ENCODE measurements at regions of chr6 and their contacts with region 1.

Region 1: DNA sequence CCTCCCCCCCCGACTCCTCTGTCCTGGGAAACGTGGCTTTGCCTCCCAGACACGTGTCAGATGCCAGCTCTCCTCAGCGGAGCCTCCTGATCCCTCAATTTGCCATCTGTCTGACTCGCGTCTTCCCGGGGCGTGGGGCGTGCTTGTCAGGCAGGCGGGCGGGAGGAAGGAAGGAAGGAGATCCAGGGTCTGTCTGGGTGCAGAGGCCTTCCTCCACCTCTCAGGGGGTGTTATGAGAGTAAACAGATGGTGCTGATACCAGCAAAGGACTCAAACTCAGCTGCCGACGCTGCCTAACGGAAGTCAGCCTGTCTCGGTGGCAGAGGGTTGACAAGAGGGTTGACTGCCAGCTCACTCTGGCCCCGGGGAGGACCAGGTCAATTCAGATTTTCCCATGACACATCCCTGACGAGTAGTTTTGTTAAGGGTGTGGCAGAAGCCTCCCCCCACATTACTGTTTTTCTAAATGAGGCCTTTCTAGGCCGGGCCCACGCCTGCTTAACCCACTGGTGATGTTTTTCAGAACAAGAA is 17.0 kb downstream of the UQCC2 start:
- DNase-seq: peak; percentile 88
- ATAC-seq: peak; percentile 83
- H3K4me3 Mint-ChIP-seq: peak overlapping the region; percentile 29
- H3K27ac Mint-ChIP-seq: peak overlapping the region; percentile 79
- H3K4me1 Mint-ChIP-seq: peaks cover 72% of the 10 kb centered on the region
- H3K27me3 Mint-ChIP-seq: no peaks in the 10 kb centered on the region
- CTCF ChIP-seq: no peak

Region 2: GRCh38 chr6:33683051-33683571 is 11.4 kb before region 1 on chr6:
- CTCF ChIA-PET with region 1: interaction called, 6 read pairs
- POLR2A ChIA-PET with region 1: interaction called, 21 read pairs
- intact Hi-C with region 1: no loop called
- DNase-seq: peak; percentile 82
- ATAC-seq: peak; percentile 91
- H3K4me3 Mint-ChIP-seq: no peak overlapping the region
- H3K27ac Mint-ChIP-seq: peak overlapping the region; percentile 83
- H3K4me1 Mint-ChIP-seq: peaks cover 17% of the 10 kb centered on the region
- H3K27me3 Mint-ChIP-seq: no peaks in the 10 kb centered on the region
- CTCF ChIP-seq: no peak

Region 3: DNA sequence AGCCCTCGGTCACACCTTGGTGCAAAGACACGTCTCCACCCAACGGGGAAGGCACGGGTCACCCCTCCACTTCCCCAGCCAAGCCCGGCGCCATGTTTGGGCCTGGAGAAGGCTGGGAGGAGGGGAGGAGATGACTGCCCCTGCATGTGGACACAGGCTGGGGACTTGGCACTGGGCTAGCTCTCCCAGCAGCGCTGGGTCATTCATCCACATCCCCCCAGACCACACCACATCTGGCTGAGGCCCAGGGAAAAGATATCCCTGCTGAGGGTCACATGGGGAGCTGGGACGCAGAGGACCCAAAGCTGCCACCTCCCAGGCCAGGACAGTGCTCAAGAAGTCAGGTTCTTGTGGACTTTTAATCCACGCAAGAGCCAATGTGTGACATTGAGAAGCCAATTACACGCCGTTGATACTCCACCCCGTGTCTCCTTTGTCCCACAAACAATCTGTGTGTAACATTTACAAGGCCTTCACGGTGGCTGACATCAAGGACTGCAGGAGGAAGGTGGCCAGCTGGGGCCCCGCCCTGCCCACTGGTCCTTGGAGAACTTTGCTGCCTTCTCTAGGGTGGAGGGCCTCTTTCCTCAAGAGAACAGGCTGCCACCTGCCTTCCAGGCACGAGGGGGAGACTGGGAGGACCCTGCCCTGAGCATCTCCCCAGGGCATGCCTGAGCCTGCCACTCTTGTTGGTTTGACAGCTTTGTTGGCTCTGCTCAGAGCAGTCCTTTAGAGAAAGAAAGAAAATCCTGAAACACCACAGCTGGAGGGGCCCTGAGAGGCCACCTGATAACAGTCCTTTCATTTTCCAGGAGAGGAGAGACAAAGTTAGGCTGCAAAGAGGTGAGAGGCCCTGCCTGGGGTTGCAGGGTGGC is 57.5 kb after region 1 on chr6:
- CTCF ChIA-PET with region 1: no interaction called
- POLR2A ChIA-PET with region 1: no interaction called
- intact Hi-C with region 1: no loop called
- DNase-seq: no peak
- ATAC-seq: no peak
- H3K4me3 Mint-ChIP-seq: no peak overlapping the region
- H3K27ac Mint-ChIP-seq: no peak overlapping the region
- H3K4me1 Mint-ChIP-seq: no peaks in the 10 kb centered on the region
- H3K27me3 Mint-ChIP-seq: no peaks in the 10 kb centered on the region
- CTCF ChIP-seq: no peak

Region 4: DNA sequence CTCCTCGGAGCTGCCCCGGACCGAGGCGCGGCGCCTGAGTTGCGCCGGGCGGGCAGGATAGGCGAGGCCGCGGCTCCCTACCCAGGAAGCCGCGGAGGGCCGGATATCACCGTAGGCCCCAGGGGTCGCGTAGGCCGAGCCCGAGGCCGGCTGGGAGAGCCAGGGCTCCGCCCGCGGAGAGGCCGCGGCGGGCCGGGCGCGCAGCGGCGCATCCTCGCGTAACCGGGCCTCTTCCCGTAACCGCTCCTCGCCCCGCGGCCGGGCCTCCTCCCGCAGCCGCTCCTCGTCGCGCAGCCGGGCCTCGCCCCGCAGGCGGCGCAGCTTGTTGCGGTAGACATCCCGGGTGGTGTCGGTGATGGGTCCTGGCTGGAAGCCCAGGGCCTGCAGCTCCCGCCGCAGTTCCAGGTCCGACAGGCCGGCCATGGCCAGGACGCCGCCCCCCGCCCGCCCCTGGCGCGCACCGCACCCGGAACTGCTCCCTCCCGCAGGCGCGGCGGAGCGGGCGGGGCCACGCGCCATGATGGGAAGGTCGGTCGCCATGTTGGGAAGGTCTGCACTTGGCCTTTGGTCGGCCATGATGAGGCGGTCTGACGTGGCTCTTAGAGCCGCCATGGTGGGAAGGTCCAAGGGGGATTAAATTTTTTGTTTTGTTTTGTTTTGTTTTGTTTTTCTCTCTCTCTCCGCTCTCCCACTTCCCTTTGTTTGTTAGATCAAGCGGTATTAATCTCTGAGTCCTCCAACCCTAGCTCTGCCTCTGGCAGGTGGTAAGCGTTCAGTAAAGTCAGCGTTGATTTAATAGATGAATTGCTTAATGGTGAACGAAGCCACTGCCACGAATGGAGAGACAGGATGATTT is 94.5 kb after region 1 on chr6 and contains the start of gene LEMD2:
- CTCF ChIA-PET with region 1: no interaction called
- POLR2A ChIA-PET with region 1: no interaction called
- intact Hi-C with region 1: no loop called
- DNase-seq: peak; percentile 92
- ATAC-seq: peak; percentile 90
- H3K4me3 Mint-ChIP-seq: peak within 1 kb of the TSS; percentile 85
- H3K27ac Mint-ChIP-seq: peak within 1 kb of the TSS; percentile 93
- H3K4me1 Mint-ChIP-seq: peaks cover 41% of the 10 kb centered on the region
- H3K27me3 Mint-ChIP-seq: no peaks in the 10 kb centered on the region
- CTCF ChIP-seq: no peak
- total RNA-seq, gene LEMD2: 40.1 to 41.5 TPM